Caco-2 (cell line): ENCODE measurements at regions of chr6 and their contacts with region 1.

Region 1: DNA sequence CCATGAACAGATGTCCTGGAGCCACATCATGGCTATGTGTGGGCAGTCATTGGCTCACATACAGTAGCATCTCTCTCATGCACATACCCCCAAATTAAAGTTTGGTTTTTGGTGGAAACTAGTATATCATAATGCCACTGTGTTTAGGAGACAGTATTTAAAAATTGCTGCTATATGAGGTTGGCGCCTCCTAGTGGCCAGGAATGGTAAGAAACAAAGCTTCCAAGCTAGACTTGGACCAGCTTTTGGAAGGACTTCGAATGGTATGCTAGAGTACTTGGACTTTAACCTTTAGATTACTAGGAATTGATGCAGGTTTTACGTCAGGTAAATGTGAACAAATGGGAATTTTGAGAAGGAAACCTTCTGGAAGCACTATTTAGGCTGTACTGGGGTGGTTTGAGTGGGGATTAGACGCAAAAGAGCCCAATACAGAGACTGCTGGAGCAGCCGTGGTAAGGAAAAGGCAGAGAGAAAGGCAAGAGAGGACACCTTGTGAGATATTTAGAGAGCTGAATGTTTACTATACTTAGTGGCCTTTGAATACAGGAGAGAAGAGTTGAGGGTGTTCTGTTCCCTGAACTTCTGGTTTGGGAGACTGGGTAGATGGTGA is 23.8 kb downstream of the PRSS35 start:
- DNase-seq: peak; percentile 59 to 75
- H3K4me3 ChIP-seq: no peak overlapping the region
- H3K4me3 Mint-ChIP-seq: no peak overlapping the region
- H3K27ac Mint-ChIP-seq: no peak overlapping the region
- H3K4me1 ChIP-seq: peaks cover 6% of the 10 kb centered on the region
- H3K4me1 Mint-ChIP-seq: peaks cover 16% of the 10 kb centered on the region
- H3K27me3 ChIP-seq: no peaks in the 10 kb centered on the region
- H3K27me3 Mint-ChIP-seq: peaks cover 6% of the 10 kb centered on the region
- CTCF ChIP-seq: peak; percentile 74 to 82

Region 2: DNA sequence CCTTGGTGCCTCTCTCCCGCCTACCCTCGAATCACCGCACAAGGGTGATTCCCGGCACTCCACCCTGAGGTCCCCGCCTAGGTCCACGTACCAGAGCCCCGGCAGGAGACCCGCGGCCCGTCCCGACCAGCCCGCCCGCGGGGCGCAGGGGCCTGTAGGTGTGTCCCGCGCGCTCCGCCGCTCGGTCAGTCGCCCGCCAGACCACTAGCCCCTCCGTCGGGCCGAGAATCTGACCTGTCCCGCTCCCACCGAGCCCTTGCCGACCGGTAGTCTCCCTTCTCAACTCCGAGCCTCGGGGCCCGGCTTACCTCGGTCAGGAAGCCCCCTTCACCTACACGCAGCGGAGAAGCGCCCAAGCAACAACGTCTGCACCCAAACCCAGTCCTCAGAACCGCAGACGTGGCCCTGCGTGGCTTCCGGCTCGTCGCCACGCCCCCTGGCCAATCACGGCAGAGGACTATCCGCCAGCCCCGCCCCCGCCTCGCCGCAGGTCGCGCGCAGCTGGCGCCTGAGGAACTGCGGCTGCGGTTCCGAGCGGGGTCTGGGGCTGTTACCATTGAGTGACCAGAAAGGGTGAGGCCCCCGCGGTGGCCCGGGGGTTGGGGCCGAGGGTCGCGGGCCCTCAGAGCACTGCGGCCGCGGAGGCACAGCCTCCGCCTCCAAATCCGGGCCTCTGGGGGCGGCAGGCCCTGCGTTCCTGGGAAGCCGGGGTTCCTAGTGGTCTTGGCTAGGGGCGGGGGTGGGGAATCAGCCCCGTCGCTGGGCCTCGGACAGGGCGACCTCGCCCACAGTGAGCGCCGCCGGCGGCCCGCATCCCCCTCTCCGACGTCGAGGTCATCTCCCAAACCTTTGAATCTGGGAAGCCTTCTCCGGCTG is 343.0 kb before region 1 on chr6 and contains the starts of genes PGM3 and RWDD2A:
- CTCF ChIA-PET with region 1: no interaction called
- POLR2A ChIA-PET with region 1: no interaction called
- intact Hi-C with region 1: loop called (anchors 1 kb)
- DNase-seq: peak; percentile 89 to 94
- H3K4me3 ChIP-seq: peak within 1 kb of the TSS; percentile 97
- H3K4me3 Mint-ChIP-seq: peak within 1 kb of the TSS; percentile 90
- H3K27ac Mint-ChIP-seq: peak within 1 kb of the TSS; percentile 92
- H3K4me1 ChIP-seq: peaks cover 24% of the 10 kb centered on the region
- H3K4me1 Mint-ChIP-seq: peaks cover 16% of the 10 kb centered on the region
- H3K27me3 ChIP-seq: no peaks in the 10 kb centered on the region
- H3K27me3 Mint-ChIP-seq: no peaks in the 10 kb centered on the region
- CTCF ChIP-seq: no peak
- total RNA-seq, gene PGM3: 96.4 and 97.0 TPM in 2 replicates
- total RNA-seq, gene RWDD2A: 3.5 and 3.6 TPM in 2 replicates

Region 3: DNA sequence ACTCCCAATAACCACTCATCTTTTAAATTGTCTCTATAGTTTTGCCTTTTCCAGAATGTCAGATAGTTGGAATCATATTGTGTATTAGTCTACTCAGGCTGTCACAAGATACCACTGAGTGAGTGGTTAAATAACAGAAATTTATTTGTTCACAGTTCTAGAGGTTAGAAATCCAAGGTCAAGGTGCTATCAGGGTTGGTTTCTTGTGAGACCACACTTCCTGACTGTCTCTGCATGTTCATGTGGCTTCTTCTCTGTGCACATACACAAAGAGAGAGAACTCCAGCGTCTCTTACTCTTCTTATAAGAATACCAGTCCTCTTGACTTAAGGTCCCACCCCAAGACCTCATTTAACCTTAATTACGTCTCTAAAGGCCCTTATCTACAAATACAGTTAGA is 47.7 kb before region 1 on chr6:
- CTCF ChIA-PET with region 1: no interaction called
- POLR2A ChIA-PET with region 1: no interaction called
- intact Hi-C with region 1: no loop called
- DNase-seq: no peak
- H3K4me3 ChIP-seq: no peak overlapping the region
- H3K4me3 Mint-ChIP-seq: no peak overlapping the region
- H3K27ac Mint-ChIP-seq: no peak overlapping the region
- H3K4me1 ChIP-seq: peaks cover 19% of the 10 kb centered on the region
- H3K4me1 Mint-ChIP-seq: peaks cover 20% of the 10 kb centered on the region
- H3K27me3 ChIP-seq: no peaks in the 10 kb centered on the region
- H3K27me3 Mint-ChIP-seq: no peaks in the 10 kb centered on the region
- CTCF ChIP-seq: no peak

Region 4: DNA sequence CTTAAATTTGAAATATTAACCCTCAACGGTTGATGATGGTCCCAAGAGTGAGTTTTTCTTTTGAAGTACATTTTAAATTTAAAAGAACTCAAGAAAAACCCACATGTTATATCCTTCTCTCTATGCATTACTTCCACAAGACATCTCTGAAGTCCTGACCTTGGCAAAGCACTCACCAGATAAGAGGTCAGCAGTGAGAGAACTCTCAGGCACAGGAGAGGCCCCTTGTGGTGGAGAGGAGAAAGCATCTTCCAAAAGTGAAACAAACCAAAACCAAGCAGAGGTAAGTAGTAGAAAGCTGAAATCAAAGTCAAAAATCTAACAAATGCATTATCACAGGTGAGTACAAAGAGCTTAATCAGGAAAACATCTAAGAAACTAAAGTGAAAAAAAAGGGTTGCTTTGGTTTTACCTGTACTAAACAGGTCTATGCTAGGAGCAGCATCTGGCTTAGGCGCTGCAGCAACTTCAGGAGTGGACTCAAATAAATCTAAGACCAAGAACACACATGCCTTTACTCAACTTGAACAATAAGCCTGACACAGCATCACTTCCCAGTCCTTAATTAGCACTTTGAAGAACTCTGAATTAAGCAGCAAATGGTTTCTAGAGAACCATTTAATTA is 56.7 kb after region 1 on chr6:
- CTCF ChIA-PET with region 1: interaction called, 4 read pairs
- POLR2A ChIA-PET with region 1: no interaction called
- intact Hi-C with region 1: loop called (anchors 2 kb)
- DNase-seq: peak; percentile 41 to 54
- H3K4me3 ChIP-seq: no peak overlapping the region
- H3K4me3 Mint-ChIP-seq: no peak overlapping the region
- H3K27ac Mint-ChIP-seq: no peak overlapping the region
- H3K4me1 ChIP-seq: no peaks in the 10 kb centered on the region
- H3K4me1 Mint-ChIP-seq: peaks cover 7% of the 10 kb centered on the region
- H3K27me3 ChIP-seq: no peaks in the 10 kb centered on the region
- H3K27me3 Mint-ChIP-seq: peaks cover 3% of the 10 kb centered on the region
- CTCF ChIP-seq: peak; percentile 59 to 84

Region 5: GRCh38 chr6:83696674-83697073 is 160.5 kb after region 1 on chr6:
- CTCF ChIA-PET with region 1: no interaction called
- POLR2A ChIA-PET with region 1: no interaction called
- intact Hi-C with region 1: no loop called
- DNase-seq: no peak
- H3K4me3 ChIP-seq: no peak overlapping the region
- H3K4me3 Mint-ChIP-seq: no peak overlapping the region
- H3K27ac Mint-ChIP-seq: no peak overlapping the region
- H3K4me1 ChIP-seq: no peaks in the 10 kb centered on the region
- H3K4me1 Mint-ChIP-seq: no peaks in the 10 kb centered on the region
- H3K27me3 ChIP-seq: no peaks in the 10 kb centered on the region
- H3K27me3 Mint-ChIP-seq: no peaks in the 10 kb centered on the region
- CTCF ChIP-seq: no peak

Region 6: DNA sequence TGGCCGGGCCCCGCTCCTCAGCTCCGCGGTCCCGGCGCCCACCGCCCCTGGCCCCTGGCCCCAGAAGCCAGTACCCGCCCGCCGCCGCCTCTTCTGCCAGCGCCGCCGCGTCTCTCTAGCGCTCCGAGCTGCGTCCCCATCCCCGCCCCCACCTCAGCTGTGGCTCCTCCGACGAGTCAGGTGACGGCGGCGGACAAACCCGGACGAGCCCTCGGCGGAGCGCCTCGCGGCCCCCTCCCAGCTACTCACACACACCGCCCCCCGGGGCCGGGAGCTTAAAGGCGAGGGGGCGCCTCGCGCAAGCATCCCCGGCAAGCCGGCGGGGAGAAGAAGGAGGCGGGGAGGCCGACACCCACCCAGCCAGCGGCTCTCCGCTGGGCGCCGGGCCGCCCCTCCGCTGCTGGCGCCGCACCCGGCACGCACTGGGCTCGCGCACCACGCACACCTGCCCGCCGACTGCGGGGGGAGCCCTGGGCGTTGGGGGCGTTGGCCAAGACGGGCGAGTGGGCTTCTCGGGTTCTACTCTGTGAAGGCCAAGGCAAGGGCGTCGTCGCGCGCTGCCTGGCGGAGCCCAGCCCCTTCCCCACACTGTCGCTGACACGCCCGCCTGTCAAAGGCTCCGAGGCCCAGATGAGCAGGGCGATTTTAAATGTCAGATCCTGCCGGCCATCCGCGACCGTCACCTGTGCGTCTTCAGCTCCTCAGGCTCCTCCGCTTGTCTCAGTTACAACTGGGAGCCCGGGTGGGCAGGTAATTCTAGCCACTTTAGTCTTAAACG is 173.0 kb after region 1 on chr6 and contains the start of gene SNAP91:
- CTCF ChIA-PET with region 1: no interaction called
- POLR2A ChIA-PET with region 1: no interaction called
- intact Hi-C with region 1: no loop called
- DNase-seq: no peak
- H3K4me3 ChIP-seq: no peak within 1 kb of the TSS
- H3K4me3 Mint-ChIP-seq: no peak within 1 kb of the TSS
- H3K27ac Mint-ChIP-seq: no peak within 1 kb of the TSS
- H3K4me1 ChIP-seq: no peaks in the 10 kb centered on the region
- H3K4me1 Mint-ChIP-seq: no peaks in the 10 kb centered on the region
- H3K27me3 ChIP-seq: no peaks in the 10 kb centered on the region
- H3K27me3 Mint-ChIP-seq: peaks cover 6% of the 10 kb centered on the region
- CTCF ChIP-seq: no peak
- total RNA-seq, gene SNAP91: not detected in 2 replicates

Region 7: DNA sequence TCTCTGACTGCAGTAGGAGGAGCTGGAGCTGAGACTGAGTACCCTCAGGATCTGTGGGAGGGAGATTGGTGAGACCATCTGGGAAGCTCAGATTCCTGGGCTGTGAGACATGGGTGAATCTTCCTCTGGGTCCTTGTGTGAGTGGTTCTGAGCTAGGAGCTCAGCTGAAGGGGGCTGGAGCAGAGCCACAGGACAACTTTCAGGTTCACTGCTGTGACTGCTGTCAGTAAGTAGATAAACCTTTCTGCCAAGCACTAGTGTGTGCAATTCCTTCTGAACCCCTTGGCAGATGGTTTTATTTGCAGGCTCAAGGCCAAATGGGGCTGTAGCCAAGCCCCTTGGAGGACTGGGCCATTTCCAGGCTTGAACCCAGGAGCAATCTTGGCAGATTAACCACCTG is 222.4 kb after region 1 on chr6:
- CTCF ChIA-PET with region 1: no interaction called
- POLR2A ChIA-PET with region 1: no interaction called
- intact Hi-C with region 1: no loop called
- DNase-seq: no peak
- H3K4me3 ChIP-seq: no peak overlapping the region
- H3K4me3 Mint-ChIP-seq: no peak overlapping the region
- H3K27ac Mint-ChIP-seq: no peak overlapping the region
- H3K4me1 ChIP-seq: no peaks in the 10 kb centered on the region
- H3K4me1 Mint-ChIP-seq: no peaks in the 10 kb centered on the region
- H3K27me3 ChIP-seq: no peaks in the 10 kb centered on the region
- H3K27me3 Mint-ChIP-seq: peaks cover 3% of the 10 kb centered on the region
- CTCF ChIP-seq: no peak